SK-N-SH (cell line): ENCODE measurements at regions of chr6 and their contacts with region 1.

Region 1: DNA sequence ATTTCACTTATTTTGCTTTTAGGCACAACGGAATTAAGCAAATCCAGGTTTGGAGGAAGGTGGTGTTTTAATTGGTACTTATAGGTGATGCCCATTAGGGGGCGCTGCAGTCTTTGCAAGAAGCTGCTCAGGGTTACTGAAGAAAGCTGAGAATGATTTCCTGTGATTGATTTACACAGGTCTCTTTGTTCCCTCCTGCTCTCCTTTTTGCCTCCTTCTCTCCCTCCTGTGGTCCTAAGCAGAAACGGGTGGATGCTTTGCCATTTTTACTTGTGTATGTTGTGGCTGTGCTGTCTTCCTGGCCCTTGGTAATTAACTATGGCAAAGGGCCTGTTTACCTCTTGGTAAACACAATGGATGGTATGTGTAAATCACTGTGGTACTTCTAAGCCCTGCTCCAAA is 97.8 kb downstream of the ANKS1A start:
- DNase-seq: peak; percentile 66
- H3K4me3 ChIP-seq: peak overlapping the region in 1 of 2 experiments; percentile 45; a peak in 1 of 4 replicates
- H3K27ac ChIP-seq: no peak overlapping the region
- H3K4me1 ChIP-seq: peaks cover 0 to 4% of the 10 kb centered on the region in 2 experiments; a peak in 2 of 4 replicates
- H3K27me3 ChIP-seq: no peaks in the 10 kb centered on the region
- CTCF ChIP-seq: peak; percentile 88
- EP300 ChIP-seq: no peak
- RAD21 ChIP-seq: peak; percentile 87

Region 2: DNA sequence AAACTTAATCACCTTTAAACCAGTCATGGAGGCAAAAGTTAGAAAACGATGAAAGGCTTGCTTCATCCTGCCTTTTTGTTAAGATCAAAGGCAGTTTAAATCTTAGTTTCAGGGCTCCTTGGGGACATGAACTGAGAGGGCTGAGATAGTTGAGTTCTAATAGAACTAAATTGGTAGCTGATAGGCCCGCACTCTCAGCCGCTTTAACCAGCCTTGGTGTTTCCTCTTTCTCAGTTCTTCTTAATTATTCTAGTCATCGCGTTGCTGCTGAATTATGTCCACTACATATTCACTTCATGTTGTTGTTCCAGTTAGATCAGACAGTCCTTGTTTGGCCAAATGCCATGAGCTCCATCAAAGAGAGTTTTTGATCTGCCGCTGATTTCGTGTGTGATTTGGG is 25.3 kb before region 1 on chr6:
- CTCF ChIA-PET with region 1: interaction called, 10 read pairs
- POLR2A ChIA-PET with region 1: no interaction called
- DNase-seq: no peak
- H3K4me3 ChIP-seq: no peak overlapping the region
- H3K27ac ChIP-seq: no peak overlapping the region
- H3K4me1 ChIP-seq: peaks cover 9 to 13% of the 10 kb centered on the region in 2 experiments; a peak in 3 of 4 replicates
- H3K27me3 ChIP-seq: no peaks in the 10 kb centered on the region
- CTCF ChIP-seq: no peak
- EP300 ChIP-seq: no peak
- RAD21 ChIP-seq: no peak

Region 3: DNA sequence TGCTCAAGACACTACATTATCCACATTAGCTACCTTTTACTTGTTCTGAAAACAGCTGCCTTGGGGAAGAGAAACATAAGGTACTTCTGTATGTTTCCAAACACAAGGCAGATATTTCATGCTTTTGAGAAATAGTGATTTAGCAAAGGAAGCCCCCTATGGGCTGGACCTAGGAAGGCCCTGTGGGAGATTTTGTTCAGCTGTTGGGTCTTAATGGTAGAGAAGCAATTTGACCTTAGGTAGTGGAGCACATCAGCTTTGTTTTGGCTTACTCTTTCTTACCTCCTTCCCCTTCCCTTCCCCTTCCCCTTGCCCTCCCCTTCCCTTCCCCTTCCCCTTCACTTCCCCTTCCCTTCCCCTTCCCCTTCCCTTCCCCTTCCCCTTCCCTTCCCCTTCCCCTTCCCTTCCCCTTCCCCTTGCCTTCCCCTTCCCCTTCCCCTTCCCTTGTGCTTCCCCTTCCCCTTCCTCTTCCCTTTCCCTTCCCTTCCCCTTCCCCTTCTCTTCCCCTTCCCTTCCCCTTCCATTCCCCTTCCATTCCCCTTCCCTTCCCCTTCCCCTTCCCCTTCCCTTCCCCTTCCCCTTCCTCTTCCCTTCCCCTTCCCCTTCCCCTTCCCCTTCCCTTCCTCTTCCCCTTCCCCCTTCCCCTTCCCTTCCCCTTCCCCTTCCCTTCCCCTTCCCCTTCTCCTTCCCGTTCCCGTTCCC is 13.1 kb before region 1 on chr6:
- CTCF ChIA-PET with region 1: interaction called, 23 read pairs
- POLR2A ChIA-PET with region 1: no interaction called
- DNase-seq: no peak
- H3K4me3 ChIP-seq: no peak overlapping the region
- H3K27ac ChIP-seq: no peak overlapping the region
- H3K4me1 ChIP-seq: peaks cover 0 to 4% of the 10 kb centered on the region in 2 experiments; a peak in 1 of 4 replicates
- H3K27me3 ChIP-seq: no peaks in the 10 kb centered on the region
- CTCF ChIP-seq: 0 out of 2 replicates have a peak, but pooled peaks have one; percentile 18
- EP300 ChIP-seq: no peak
- RAD21 ChIP-seq: 0 out of 2 replicates have a peak, but pooled peaks have one; percentile 12

Region 4: DNA sequence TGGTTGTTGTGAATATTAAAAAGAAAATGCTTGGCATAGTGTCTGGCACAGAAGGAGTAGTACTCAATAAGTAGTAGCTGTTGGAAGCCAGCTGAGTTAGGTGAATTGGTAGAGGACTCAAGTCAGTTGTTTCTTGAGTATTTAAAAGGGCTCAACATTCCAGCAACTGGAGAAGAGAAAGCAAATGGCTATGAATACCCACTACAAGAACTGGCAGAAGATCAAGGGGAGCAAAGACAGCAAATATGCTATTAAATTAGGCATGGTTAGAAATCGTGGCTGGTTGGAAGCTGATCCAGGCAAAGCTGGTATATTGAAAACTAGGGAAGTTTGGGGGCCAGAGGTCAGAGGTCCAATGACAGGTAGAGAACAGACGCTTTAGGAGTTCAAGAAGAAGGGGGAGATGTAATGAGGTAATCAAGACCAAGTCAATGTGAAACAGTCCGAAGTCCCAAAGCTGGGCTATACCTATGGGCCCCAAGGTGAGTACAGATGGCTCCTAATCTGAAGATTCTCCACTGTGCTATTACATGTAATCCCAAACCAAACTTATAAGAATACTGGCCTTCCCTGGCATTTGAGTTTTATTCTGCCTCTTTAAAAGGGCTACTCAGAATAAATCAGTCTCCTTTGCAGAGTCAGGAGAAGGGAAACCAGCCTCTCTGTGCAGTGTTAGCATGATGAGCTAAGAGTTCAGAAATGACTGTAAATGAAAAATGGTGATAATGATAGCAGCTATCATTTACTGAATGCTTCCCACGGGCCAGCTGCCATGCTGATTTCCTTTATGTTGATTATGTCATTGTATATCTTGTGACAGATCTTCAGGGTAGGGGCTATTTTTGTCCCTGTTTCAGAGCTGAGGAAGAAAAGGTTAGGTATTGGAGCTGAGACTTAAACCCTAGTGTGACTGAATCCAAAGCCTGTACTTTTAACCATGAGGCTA is 24.5 kb after region 1 on chr6:
- CTCF ChIA-PET with region 1: interaction called, 15 read pairs
- POLR2A ChIA-PET with region 1: no interaction called
- DNase-seq: no peak
- H3K4me3 ChIP-seq: no peak overlapping the region
- H3K27ac ChIP-seq: no peak overlapping the region; a peak in 1 of 4 replicates
- H3K4me1 ChIP-seq: peaks cover 0 to 12% of the 10 kb centered on the region in 2 experiments; a peak in 2 of 4 replicates
- H3K27me3 ChIP-seq: no peaks in the 10 kb centered on the region
- CTCF ChIP-seq: no peak
- EP300 ChIP-seq: no peak
- RAD21 ChIP-seq: no peak

Region 5: DNA sequence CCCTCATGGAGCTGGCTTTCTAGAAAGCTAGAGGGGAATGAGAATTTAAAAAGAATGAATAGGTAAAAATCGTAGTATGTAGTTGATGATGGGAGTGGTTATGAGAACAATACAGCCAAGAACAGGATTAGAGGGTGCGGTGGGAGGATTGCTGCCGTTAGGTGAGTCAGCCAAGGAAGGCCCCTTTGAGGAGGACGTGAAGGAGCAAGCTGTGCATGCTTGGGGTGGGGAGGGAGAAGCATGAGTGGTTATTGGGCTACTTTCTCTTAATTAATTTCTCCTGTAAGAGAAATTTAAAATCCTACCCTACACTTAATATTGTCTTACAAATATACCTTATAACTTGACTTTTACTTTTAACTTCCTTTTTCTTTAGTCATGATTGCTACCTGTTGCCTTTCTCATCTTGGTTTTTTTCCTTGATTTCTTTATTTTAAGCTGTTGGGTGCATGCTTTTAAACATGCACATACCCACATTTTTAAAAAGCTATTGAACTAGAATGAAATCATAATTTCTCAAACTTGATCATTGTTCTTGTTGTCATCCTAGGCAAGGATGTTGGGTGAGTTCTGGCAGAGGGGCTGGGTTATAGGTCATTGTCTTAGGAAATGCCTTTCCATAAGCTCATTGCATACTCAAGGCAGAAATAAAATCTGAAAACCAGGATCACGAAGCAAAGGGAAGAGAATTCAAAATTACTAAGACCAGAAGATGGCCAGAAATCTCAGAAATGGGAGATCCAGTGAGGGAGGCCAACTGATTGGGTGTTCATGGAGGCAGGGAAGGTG is 39.8 kb after region 1 on chr6:
- CTCF ChIA-PET with region 1: interaction called, 10 read pairs
- POLR2A ChIA-PET with region 1: no interaction called
- DNase-seq: no peak
- H3K4me3 ChIP-seq: no peak overlapping the region
- H3K27ac ChIP-seq: no peak overlapping the region; a peak in 1 of 4 replicates
- H3K4me1 ChIP-seq: peaks cover 9 to 14% of the 10 kb centered on the region in 2 experiments; a peak in 3 of 4 replicates
- H3K27me3 ChIP-seq: no peaks in the 10 kb centered on the region
- CTCF ChIP-seq: no peak
- EP300 ChIP-seq: no peak
- RAD21 ChIP-seq: no peak

Region 6: GRCh38 chr6:35128496-35128895 is 141.7 kb after region 1 on chr6:
- CTCF ChIA-PET with region 1: interaction called, 10 read pairs
- POLR2A ChIA-PET with region 1: no interaction called
- DNase-seq: no peak
- H3K4me3 ChIP-seq: no peak overlapping the region
- H3K27ac ChIP-seq: no peak overlapping the region
- H3K4me1 ChIP-seq: no peaks in the 10 kb centered on the region
- H3K27me3 ChIP-seq: no peaks in the 10 kb centered on the region; the same call in 1 of the 2 replicates
- CTCF ChIP-seq: no peak
- EP300 ChIP-seq: no peak
- RAD21 ChIP-seq: no peak

Region 7: DNA sequence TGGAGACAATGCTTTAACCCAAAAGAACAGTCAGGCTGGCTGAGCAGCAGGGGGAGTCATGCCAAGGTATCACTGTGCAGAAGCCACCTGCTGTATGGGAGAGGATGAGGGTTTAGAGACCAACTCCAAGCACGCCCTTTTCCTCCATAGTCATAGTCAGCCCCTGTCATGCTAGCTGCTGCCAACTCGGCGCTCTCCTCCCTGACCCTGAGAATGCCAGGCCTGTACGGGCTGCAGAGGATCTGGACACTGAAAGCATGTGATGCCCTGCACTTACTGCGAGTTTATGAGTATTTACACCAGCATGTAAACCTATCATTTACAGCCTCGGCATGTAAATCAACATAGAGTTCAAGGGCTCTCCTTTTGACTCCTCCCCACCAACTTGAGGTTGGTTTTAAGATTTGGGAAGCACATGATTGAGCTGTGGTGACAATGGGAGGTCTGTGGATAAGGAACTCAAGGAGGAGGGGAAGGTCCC is 215.3 kb after region 1 on chr6:
- CTCF ChIA-PET with region 1: interaction called, 17 read pairs
- POLR2A ChIA-PET with region 1: no interaction called
- DNase-seq: no peak
- H3K4me3 ChIP-seq: no peak overlapping the region
- H3K27ac ChIP-seq: no peak overlapping the region
- H3K4me1 ChIP-seq: no peaks in the 10 kb centered on the region
- H3K27me3 ChIP-seq: no peaks in the 10 kb centered on the region
- CTCF ChIP-seq: no peak
- EP300 ChIP-seq: no peak
- RAD21 ChIP-seq: no peak